ENCODE measurements at regions of chr3 and their contacts with region 1.

Region 1: DNA sequence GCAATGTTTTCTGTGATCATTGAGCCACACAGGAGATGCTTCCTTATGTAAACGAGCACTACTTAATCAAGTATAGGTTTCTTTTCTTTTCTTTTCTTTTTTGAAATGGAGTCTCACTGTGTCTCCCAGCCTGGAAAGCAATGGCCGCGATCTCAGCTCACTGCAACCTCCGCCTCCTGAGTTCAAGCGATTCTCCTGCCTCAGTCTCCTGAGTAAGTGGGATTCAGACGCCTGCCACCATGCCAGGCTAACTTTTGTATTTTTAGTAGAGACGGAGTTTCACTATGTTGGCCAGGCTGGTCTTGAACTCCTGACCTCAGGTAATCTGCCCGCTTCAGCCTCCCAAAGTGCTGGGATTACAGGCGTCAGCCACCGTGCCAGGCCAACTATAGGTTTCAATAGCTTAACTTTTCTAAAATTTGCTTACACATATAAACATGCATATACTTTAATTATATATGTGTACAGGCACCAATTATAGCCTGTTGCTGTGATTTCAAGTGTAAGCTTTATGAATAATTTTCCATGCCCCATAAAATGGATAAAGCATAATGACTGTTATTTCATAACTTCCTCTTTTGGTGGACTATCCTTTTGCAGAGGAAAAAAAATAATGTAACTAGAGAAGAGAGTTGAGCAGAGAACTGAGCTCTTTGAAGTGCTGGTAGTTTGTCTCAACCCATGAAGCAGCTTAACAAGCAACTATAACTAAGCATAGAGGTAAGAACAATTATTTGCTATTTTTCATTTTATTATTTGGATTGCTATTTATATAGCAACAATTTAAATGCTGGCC is 24.8 kb upstream of the MBNL1 start:
- DNase-seq: peak; percentile 55
- H3K4me3 Mint-ChIP-seq: peak overlapping the region; percentile 98
- H3K27ac Mint-ChIP-seq: peak overlapping the region; percentile 89
- H3K4me1 Mint-ChIP-seq: peaks cover 48% of the 10 kb centered on the region
- H3K27me3 Mint-ChIP-seq: no peaks in the 10 kb centered on the region

Region 2: DNA sequence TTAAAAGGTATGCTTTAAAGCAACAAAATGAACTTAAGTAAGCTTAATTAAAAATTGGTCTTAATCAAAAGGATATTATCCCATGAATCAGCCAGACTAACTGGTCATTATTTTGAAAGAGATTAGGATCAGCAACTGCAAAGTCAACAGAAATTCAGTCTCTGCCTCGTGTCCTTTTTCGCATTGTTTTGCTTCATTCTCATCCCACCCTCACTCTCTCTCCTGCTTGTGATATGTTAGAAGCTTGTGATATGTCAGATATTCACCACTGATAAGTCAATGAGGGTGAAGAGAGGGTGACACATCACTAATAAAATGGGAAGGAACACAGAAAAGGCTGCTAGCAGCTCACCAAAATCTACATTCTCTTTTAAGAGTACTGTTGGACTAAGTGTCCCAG is 224.4 kb before region 1 on chr3:
- CTCF ChIA-PET with region 1: no interaction called
- DNase-seq: no peak
- H3K4me3 Mint-ChIP-seq: no peak overlapping the region
- H3K27ac Mint-ChIP-seq: no peak overlapping the region
- H3K4me1 Mint-ChIP-seq: no peaks in the 10 kb centered on the region
- H3K27me3 Mint-ChIP-seq: peaks cover 11% of the 10 kb centered on the region

Region 3: DNA sequence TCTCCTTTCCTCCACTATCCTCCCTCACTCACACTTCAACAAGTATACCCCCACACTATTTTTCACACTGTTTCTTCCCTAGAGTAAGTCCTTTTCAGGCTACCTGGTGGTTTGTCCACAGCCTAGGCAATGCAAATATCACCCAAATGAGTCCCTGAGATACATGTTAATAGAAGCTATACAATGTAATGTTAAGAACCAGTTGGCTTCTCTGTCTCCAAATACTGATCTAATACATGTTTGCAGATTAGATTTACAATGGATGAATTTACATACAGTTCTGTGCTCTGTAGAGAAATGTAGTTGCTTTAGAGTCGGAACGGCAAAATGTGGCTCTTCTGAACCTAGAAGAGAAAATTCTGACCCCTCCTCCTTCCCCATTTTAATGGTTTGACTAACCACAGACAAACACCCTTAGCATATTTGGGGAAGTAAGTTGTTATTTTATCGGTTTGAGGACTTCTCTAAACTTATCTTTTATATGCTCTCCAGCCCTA is 38.8 kb before region 1 on chr3:
- CTCF ChIA-PET with region 1: interaction called, 10 read pairs
- DNase-seq: no peak
- H3K4me3 Mint-ChIP-seq: peak overlapping the region; percentile 91
- H3K27ac Mint-ChIP-seq: peak overlapping the region; percentile 96
- H3K4me1 Mint-ChIP-seq: peaks cover 67% of the 10 kb centered on the region
- H3K27me3 Mint-ChIP-seq: no peaks in the 10 kb centered on the region

Measured in activated naive CD4-positive, alpha-beta T cell treated with anti-CD3 and anti-CD28 coated beads, Interleukin-2, amount 10 ng/mL, durations not matched to agents 7 days and 5 days (primary cell).